ENCODE measurements at regions of chr7 and their contacts with region 1.

Region 1: GRCh38 chr7:154927624-154928143 is 75.2 kb downstream of the PAXIP1 start:
- DNase-seq: peak; percentile 49
- CTCF ChIP-seq: peak; percentile 72

Region 2: DNA sequence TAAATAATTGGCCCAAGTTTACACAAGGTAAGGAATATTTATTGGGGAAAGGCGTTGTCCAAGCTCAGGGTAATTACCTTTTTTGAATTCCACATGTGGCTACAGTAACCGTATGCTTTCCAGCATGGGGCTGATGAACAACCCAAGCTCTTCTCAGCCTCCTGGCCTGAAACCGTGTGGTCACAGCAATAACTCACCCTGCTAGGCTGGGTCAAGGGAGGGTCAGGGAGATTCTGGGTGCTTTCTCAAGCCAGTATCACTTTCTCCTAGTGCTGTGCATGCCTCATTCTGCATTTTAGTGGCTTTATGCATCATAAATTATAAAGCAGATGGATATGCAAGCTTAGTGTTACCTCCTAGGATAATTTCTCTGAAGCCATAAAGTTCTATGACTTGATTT is 198.6 kb before region 1 on chr7:
- CTCF ChIA-PET with region 1: no interaction called
- POLR2A ChIA-PET with region 1: no interaction called
- DNase-seq: no peak
- CTCF ChIP-seq: no peak

Region 3: DNA sequence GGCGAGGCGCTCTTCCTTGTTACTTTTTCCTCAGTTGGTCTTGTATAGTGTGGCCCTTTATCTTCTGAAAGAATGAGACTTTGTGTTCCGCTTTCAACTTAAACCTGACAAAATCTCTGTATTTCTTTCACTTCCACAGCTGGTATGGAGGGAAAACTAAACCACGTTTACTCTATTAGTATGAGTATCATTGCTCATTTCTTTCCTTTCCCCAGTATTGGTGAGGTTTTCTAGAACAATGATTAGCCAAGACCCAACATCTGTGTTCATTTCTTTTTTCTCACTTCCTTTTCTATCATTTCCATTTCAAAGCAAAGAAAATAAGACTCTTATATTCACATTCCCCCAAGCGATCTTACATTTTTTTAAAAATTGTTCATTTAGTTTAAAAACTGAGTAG is 90.1 kb before region 1 on chr7:
- CTCF ChIA-PET with region 1: no interaction called
- POLR2A ChIA-PET with region 1: no interaction called
- DNase-seq: no peak
- CTCF ChIP-seq: no peak

Region 4: GRCh38 chr7:154913638-154914312 is 13.9 kb before region 1 on chr7:
- CTCF ChIA-PET with region 1: interaction called, 67 read pairs
- POLR2A ChIA-PET with region 1: no interaction called
- DNase-seq: peak; percentile 87
- CTCF ChIP-seq: peak; percentile 97

Region 5: DNA sequence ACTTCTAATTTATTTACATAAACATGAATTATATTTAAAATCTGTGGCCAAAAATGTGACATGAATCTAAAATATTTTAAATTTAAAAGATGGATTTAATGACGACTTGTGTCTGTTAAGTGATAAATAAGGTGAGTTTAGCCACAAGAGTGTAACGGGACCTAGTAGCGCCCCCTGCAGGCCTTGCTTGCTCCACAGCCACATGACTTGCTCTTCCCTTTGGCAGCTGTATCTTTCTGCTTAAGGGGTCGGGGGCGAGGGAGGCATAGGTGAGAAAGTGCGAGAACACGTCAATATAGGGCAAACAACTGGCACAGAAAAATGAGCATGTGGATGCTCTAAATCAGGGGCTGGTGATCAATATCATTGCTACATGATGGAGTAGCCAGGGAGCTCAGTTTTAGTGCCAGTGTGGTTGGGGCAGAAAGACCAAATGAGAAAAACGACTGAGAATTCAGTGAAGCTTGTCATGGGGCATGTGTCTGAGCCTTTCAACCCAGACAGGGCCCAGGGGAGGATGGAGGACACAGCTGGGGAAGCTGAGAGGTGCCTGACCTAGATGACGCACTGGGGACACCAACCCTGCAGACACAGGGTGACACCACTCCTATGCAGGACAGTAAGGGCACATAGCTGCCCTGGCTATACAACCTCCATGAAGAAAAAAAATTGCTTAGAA is 25.5 kb after region 1 on chr7:
- CTCF ChIA-PET with region 1: interaction called, 38 read pairs
- POLR2A ChIA-PET with region 1: no interaction called
- DNase-seq: peak; percentile 50
- CTCF ChIP-seq: peak; percentile 57

Region 6: GRCh38 chr7:155003376-155004214 is 75.9 kb after region 1 on chr7:
- CTCF ChIA-PET with region 1: interaction called, 34 read pairs
- POLR2A ChIA-PET with region 1: no interaction called
- DNase-seq: peak; percentile 97
- CTCF ChIP-seq: no peak

Region 7: GRCh38 chr7:155356323-155357105 is 428.8 kb after region 1 on chr7:
- CTCF ChIA-PET with region 1: interaction called, 22 read pairs
- POLR2A ChIA-PET with region 1: no interaction called
- DNase-seq: no peak
- CTCF ChIP-seq: peak; percentile 9

Region 8: DNA sequence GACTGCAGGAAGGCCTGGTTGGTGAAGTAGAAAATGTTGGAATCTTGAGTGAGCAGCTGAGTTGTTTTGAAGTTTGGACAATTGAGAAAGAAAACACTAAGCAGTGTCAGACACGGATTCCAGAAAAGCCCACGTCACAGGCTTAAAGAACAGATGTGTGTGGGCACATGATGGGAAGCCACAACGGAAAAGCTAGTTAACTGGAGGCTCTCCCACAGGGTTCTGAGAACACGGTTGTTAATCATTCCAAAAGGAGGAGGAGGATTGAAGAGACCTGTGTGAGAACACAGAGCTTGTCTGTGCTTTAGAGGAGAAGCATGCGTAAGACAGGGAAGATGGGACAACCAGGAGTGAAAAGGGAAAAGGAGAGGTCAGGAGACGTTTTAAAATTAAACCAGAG is 842.0 kb after region 1 on chr7:
- CTCF ChIA-PET with region 1: interaction called, 10 read pairs
- POLR2A ChIA-PET with region 1: no interaction called
- DNase-seq: no peak
- CTCF ChIP-seq: no peak

Measured in GM10248 (cell line).